ENCODE measurements at regions of chr10 and their contacts with region 1.

Region 1: DNA sequence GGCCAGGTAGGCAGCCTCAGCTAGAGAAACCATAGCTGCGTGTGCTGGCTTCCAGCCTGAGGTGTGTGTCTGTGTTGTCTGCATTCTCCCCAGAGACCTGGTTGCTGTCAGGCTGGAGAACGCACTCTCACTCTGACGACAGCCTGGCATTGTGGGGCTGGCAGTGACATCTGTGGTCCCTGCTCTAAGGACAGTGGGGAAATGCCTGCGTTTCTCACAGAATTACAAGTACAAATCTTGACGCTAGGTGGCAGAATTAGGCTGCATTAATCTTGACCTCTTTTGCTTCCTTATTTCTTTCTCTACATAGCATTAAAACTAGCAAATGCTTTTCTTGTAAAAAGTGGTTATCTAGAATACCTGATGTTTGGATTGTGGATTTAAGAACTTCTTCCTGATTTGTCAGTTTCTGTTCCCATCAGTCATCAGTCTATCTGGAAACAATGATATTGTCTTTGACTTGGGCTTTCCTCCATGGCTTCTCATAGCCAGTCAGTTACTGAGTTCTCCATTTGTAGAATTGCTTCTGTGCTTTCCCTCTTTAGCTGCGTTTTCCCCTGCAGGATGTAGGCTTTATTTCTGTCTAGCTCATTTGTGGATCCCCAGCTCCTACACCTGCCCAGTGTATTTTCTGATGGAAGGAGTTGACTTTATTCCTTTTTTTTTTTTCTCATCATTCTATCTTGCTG is 86.0 kb downstream of the FANK1 start:
- DNase-seq: no peak
- ATAC-seq: peak; percentile 75 to 91 (median 82)
- H3K4me3 ChIP-seq: no peak overlapping the region
- H3K27ac ChIP-seq: no peak overlapping the region
- H3K4me1 ChIP-seq: no peaks in the 10 kb centered on the region
- H3K27me3 ChIP-seq: no peaks in the 10 kb centered on the region
- CTCF ChIP-seq: peak; percentile 70 to 79 (median 71)
- POLR2A ChIP-seq: no peak

Region 2: DNA sequence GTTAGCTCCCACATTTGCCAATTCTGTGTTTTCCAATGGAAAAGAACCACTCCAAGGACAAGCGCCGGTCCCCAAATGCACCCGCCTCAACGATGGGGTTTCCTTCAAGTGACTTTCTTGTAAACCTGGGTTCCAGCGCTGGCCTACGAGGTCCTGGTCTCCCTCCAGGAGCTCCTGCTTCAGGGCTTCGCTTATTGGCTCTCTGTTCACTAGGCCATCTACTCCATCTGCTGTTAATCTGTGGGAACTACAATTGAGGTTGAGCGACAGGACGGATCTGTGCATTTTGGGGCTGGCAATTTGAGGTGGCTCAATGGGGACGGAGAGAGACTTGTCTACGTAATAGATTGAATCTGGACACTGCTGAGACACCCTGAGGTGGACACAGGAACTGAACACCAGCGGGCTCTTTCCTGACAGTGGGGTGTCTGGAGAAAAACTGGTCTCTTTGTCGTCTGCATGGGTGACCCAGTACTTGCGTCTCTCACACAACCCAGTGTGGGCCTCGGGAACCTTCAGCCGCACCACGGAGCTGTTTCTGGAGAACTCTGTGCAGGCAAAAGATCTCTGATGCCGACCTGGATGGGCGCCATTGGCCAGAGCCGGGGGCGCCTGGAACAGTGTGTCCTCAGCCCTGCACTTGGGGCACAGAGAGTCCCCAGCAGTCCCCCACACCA is 521.8 kb after region 1 on chr10:
- intact Hi-C with region 1: loop called in 1 of 2 experiments (anchors 10 kb)
- DNase-seq: peak in 1 of 3 donors; percentile 46
- ATAC-seq: peak; percentile 76 to 89 (median 86)
- H3K4me3 ChIP-seq: no peak overlapping the region
- H3K27ac ChIP-seq: no peak overlapping the region
- H3K4me1 ChIP-seq: no peaks in the 10 kb centered on the region
- H3K27me3 ChIP-seq: no peaks in the 10 kb centered on the region
- CTCF ChIP-seq: peak; percentile 55 to 74 (median 64)
- POLR2A ChIP-seq: no peak